Calu3 (cell line): ENCODE measurements at regions of chr10 and their contacts with region 1.

Region 1: DNA sequence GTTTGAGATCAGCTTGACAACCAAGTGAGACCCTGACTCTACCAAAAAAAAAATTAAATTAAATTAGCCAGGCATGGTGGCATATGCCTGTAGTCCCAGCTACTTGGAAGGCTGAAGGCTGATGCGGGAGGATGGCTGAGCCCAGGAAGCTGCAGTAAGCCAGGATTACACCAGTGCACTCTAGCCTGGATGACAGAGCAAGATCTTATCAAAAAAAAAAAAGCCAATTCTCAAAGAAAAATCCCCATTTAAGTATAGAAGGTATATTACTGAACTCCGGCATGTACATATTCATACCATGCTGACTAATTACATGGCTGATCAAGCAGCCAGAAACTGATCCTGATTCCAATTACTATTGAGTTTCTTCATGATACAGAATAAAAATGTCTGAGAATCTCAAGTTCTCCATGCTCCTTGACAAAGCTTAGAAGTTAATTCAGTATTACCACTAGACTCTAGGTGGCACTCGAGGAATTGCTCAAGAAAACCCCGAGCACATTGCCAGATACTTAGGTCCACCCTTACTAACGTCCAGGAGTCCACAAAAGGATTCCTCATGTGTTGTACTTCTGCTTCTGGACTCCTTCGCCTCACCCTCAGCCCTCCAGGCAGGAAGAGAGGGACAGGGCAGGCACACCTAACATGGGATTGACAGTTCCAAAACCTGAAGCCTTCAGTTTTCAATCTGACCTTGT is 148.9 kb downstream of the PARD3 start:
- DNase-seq: peak; percentile 54
- H3K4me3 Mint-ChIP-seq: no peak overlapping the region
- H3K27ac Mint-ChIP-seq: no peak overlapping the region
- H3K4me1 Mint-ChIP-seq: peaks cover 17% of the 10 kb centered on the region
- H3K27me3 Mint-ChIP-seq: no peaks in the 10 kb centered on the region
- CTCF ChIP-seq: no peak

Region 2: GRCh38 chr10:34638412-34639054 is 27.6 kb before region 1 on chr10:
- CTCF ChIA-PET with region 1: no interaction called
- intact Hi-C with region 1: no loop called
- DNase-seq: peak; percentile 79
- H3K4me3 Mint-ChIP-seq: no peak overlapping the region
- H3K27ac Mint-ChIP-seq: peak overlapping the region; percentile 34
- H3K4me1 Mint-ChIP-seq: peaks cover 49% of the 10 kb centered on the region
- H3K27me3 Mint-ChIP-seq: no peaks in the 10 kb centered on the region
- CTCF ChIP-seq: peak; percentile 89

Region 3: GRCh38 chr10:34746094-34746493 is 79.9 kb after region 1 on chr10:
- CTCF ChIA-PET with region 1: no interaction called
- intact Hi-C with region 1: no loop called
- DNase-seq: peak; percentile 42
- H3K4me3 Mint-ChIP-seq: no peak overlapping the region
- H3K27ac Mint-ChIP-seq: no peak overlapping the region
- H3K4me1 Mint-ChIP-seq: peaks cover 61% of the 10 kb centered on the region
- H3K27me3 Mint-ChIP-seq: no peaks in the 10 kb centered on the region
- CTCF ChIP-seq: no peak

Region 4: GRCh38 chr10:34814223-34814912 is 148.2 kb after region 1 on chr10:
- CTCF ChIA-PET with region 1: no interaction called
- intact Hi-C with region 1: loop called (anchors 5 kb)
- DNase-seq: peak; percentile 68
- H3K4me3 Mint-ChIP-seq: peak overlapping the region; percentile 62
- H3K27ac Mint-ChIP-seq: peak overlapping the region; percentile 62
- H3K4me1 Mint-ChIP-seq: peaks cover 56% of the 10 kb centered on the region
- H3K27me3 Mint-ChIP-seq: no peaks in the 10 kb centered on the region
- CTCF ChIP-seq: peak; percentile 14

Region 5: DNA sequence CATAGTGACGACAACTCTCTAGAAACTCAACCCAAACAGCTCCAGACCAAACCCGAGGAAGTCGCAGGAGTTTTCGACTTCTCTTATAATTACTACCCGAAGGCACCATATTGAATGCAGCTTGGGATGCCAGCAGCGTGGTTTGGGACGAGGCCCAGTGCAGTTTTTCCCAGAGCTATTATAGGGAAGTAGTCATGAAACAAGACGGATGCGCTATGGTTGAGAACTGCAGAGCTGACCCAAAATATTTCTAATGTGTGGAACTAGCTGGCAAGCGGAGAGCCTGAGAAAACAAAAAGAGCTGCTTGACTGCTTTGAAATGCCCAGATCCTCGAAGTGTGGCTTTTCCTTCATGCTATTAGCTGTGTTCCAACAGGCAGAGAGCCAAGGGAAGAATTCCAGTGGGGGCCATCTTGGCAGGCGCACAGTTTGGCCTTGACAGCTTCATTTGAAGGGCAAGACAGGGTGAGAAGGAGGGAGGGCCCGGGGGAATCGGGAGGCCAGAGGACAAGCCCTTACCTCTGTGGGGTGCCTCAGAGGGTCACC is 301.3 kb after region 1 on chr10:
- CTCF ChIA-PET with region 1: no interaction called
- intact Hi-C with region 1: loop called (anchors 5 kb)
- DNase-seq: no peak
- H3K4me3 Mint-ChIP-seq: no peak overlapping the region
- H3K27ac Mint-ChIP-seq: no peak overlapping the region
- H3K4me1 Mint-ChIP-seq: peaks cover 15% of the 10 kb centered on the region
- H3K27me3 Mint-ChIP-seq: no peaks in the 10 kb centered on the region
- CTCF ChIP-seq: no peak

Region 6: DNA sequence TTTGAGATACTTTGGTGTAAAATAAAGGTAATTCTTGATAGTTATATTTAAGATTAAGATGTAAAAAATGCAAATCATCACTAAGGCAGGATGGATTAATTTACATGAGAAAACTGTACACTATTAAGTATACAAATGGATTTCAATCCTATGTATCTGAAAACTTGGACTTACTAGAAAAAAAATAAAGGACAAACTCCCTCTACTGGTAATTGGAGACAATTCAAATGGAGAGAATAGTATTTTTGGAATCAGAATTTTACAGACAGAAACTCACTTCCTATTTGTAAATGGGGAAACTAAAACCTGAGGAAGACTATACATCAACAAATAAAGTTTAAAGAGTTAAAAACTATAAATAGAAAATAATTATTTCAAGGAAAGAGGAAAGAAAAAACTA is 361.4 kb after region 1 on chr10:
- CTCF ChIA-PET with region 1: no interaction called
- intact Hi-C with region 1: loop called (anchors 5 kb)
- DNase-seq: no peak
- H3K4me3 Mint-ChIP-seq: no peak overlapping the region
- H3K27ac Mint-ChIP-seq: no peak overlapping the region
- H3K4me1 Mint-ChIP-seq: no peaks in the 10 kb centered on the region
- H3K27me3 Mint-ChIP-seq: no peaks in the 10 kb centered on the region
- CTCF ChIP-seq: no peak